ENCODE measurements at regions of chr5 and their contacts with region 1.

Region 1: GRCh38 chr5:57887851-57888621 is 405.4 kb upstream of the ACTBL2 start:
- DNase-seq: peak; percentile 69
- ATAC-seq: peak; percentile 89
- H3K4me3 ChIP-seq: no peak overlapping the region
- H3K27ac ChIP-seq: no peak overlapping the region
- H3K4me1 ChIP-seq: peaks cover 29% of the 10 kb centered on the region
- H3K27me3 ChIP-seq: no peaks in the 10 kb centered on the region
- CTCF ChIP-seq: peak; percentile 73

Region 2: DNA sequence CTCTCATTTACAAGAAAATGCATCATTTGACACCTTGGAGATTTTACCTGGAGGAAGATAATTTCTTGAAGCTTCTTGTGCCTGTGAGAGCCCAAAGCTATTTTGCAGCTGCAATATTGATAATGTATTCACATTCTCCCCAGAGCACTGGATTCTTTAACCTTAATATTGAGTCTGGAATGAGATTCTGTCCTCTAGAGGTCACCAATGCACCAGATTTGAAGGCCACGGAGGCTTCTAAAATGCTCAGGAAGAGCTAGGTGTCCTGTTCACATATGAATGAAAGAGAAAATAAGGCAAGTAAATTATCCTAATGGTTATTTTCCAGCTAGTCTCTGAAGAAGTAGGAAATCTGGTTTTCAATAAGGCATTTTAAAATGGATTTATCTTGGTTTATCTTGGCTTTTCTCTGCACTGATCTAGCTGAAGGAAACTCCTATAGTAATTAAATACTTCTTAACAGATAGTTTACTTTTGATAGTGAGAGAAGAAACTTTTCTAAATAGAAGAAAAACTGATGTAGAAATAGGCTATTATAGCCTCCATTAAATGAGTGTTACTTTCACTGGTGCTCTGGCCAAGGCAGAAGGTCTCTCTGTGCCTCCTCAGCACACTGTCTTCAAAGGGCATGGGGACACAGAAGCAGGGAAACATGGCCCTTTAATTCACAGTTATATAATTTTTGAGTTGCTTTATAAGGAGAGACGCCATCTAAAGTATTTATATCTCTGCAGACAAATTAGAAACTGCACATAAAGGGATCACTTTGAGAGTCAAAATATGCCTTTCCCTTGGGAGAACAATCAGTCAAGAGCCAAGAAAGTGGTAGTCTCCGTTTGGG is 108.4 kb before region 1 on chr5:
- CTCF ChIA-PET with region 1: interaction called, 17 read pairs
- POLR2A ChIA-PET with region 1: no interaction called
- intact Hi-C with region 1: loop called (anchors 1 kb)
- DNase-seq: peak; percentile 83
- ATAC-seq: peak; percentile 44
- H3K4me3 ChIP-seq: no peak overlapping the region
- H3K27ac ChIP-seq: peak overlapping the region; percentile 40
- H3K4me1 ChIP-seq: peaks cover 47% of the 10 kb centered on the region
- H3K27me3 ChIP-seq: no peaks in the 10 kb centered on the region
- CTCF ChIP-seq: peak; percentile 71

Region 3: DNA sequence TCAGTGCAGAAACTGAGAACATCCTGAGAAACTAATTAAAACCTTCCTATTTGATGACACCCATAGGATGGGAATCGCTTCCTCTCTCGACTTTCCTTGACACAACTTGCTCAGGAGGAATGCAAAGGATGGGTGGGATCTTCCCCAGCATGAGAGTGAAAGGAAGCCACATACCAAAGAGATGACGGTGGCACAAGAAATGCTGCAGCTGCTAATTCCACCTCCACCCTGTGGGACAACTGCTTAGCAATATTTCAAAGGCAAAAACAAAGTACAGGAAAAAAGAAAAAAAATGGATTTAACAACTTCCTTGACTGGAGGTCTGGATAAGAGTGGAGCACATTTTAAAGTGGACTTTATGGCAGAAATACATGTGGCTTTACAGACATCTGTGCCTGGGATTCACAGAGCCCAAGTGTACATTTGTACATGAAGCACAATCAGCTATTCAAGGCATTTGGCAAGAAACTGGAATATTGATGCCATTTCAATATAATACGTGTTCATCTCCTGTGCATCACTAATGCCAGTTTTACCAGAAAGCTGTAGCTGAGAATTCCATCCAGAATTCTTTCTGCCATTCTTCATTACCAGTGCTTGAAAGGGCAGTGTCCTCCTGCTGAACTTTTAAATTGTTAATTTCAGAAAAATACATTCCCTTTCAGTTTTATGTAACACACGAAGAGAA is 46.2 kb before region 1 on chr5:
- CTCF ChIA-PET with region 1: interaction called, 3 read pairs
- POLR2A ChIA-PET with region 1: interaction called, 3 read pairs
- intact Hi-C with region 1: loop called (anchors 1 kb)
- DNase-seq: peak; percentile 87
- ATAC-seq: peak; percentile 64
- H3K4me3 ChIP-seq: peak overlapping the region; percentile 12; the same call in 1 of the 2 replicates
- H3K27ac ChIP-seq: peak overlapping the region; percentile 81
- H3K4me1 ChIP-seq: peaks cover 57% of the 10 kb centered on the region
- H3K27me3 ChIP-seq: no peaks in the 10 kb centered on the region
- CTCF ChIP-seq: no peak

Region 4: GRCh38 chr5:57937025-57937424 is 49.0 kb after region 1 on chr5:
- CTCF ChIA-PET with region 1: no interaction called
- POLR2A ChIA-PET with region 1: no interaction called
- intact Hi-C with region 1: no loop called
- DNase-seq: no peak
- ATAC-seq: no peak
- H3K4me3 ChIP-seq: no peak overlapping the region
- H3K27ac ChIP-seq: no peak overlapping the region
- H3K4me1 ChIP-seq: no peaks in the 10 kb centered on the region
- H3K27me3 ChIP-seq: no peaks in the 10 kb centered on the region
- CTCF ChIP-seq: no peak

Region 5: GRCh38 chr5:58133631-58134296 is 245.7 kb after region 1 on chr5:
- CTCF ChIA-PET with region 1: no interaction called
- POLR2A ChIA-PET with region 1: no interaction called
- intact Hi-C with region 1: loop called (anchors 1 kb)
- DNase-seq: peak; percentile 66
- ATAC-seq: peak; percentile 70
- H3K4me3 ChIP-seq: 0 out of 2 replicates have a peak overlapping the region, but pooled peaks have one; percentile 4
- H3K27ac ChIP-seq: peak overlapping the region; percentile 94
- H3K4me1 ChIP-seq: peaks cover 41% of the 10 kb centered on the region
- H3K27me3 ChIP-seq: no peaks in the 10 kb centered on the region
- CTCF ChIP-seq: no peak

Measured in PC-3 (cell line).